ENCODE measurements at regions of chr20 and their contacts with region 1.

Region 1: GRCh38 chr20:24781422-24781980 is 167.6 kb upstream of the CST7 start:
- DNase-seq: no peak
- ATAC-seq: no peak
- H3K4me3 Mint-ChIP-seq: no peak overlapping the region
- H3K27ac Mint-ChIP-seq: no peak overlapping the region
- H3K4me1 Mint-ChIP-seq: peaks cover 9% of the 10 kb centered on the region
- H3K27me3 Mint-ChIP-seq: peaks cover 4% of the 10 kb centered on the region
- CTCF ChIP-seq: no peak

Region 2: DNA sequence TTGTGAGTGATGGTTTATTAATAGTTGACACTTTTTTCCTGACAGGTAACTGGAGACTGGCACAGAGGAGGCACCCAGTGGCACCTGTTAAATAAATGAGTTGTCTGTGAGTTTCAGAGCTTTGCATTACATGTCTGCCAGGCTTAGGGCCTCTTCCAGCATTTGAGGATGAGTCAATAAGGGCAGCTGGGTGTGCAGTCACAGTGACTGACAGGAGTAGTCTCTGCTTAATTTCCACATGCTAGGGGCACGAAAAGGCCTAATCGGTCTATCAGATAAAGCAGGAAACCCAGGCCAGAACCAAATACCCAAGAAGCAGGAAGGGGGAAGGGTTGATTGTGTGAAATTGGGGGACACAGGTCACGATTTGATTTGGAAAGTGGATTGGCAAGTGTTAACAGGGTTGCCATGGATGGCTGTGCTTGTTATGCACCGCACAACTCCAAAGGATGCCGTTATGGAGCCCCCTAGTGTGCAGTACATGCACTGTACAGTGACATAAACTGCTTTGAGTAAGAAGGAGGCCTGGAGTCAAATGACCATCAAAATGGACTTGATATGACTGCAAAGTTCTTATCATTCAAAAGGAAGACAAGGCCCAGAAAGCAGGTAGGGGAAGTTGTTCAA is 681.0 kb before region 1 on chr20:
- CTCF ChIA-PET with region 1: interaction called, 6 read pairs
- POLR2A ChIA-PET with region 1: no interaction called
- intact Hi-C with region 1: loop called (anchors 2 kb)
- DNase-seq: no peak
- ATAC-seq: no peak
- H3K4me3 Mint-ChIP-seq: no peak overlapping the region
- H3K27ac Mint-ChIP-seq: no peak overlapping the region
- H3K4me1 Mint-ChIP-seq: no peaks in the 10 kb centered on the region
- H3K27me3 Mint-ChIP-seq: peaks cover 14% of the 10 kb centered on the region
- CTCF ChIP-seq: no peak

Region 3: GRCh38 chr20:24735263-24735662 is 46.2 kb before region 1 on chr20:
- CTCF ChIA-PET with region 1: no interaction called
- POLR2A ChIA-PET with region 1: no interaction called
- intact Hi-C with region 1: no loop called
- DNase-seq: no peak
- ATAC-seq: no peak
- H3K4me3 Mint-ChIP-seq: no peak overlapping the region
- H3K27ac Mint-ChIP-seq: no peak overlapping the region
- H3K4me1 Mint-ChIP-seq: peaks cover 10% of the 10 kb centered on the region
- H3K27me3 Mint-ChIP-seq: no peaks in the 10 kb centered on the region
- CTCF ChIP-seq: no peak

Region 4: DNA sequence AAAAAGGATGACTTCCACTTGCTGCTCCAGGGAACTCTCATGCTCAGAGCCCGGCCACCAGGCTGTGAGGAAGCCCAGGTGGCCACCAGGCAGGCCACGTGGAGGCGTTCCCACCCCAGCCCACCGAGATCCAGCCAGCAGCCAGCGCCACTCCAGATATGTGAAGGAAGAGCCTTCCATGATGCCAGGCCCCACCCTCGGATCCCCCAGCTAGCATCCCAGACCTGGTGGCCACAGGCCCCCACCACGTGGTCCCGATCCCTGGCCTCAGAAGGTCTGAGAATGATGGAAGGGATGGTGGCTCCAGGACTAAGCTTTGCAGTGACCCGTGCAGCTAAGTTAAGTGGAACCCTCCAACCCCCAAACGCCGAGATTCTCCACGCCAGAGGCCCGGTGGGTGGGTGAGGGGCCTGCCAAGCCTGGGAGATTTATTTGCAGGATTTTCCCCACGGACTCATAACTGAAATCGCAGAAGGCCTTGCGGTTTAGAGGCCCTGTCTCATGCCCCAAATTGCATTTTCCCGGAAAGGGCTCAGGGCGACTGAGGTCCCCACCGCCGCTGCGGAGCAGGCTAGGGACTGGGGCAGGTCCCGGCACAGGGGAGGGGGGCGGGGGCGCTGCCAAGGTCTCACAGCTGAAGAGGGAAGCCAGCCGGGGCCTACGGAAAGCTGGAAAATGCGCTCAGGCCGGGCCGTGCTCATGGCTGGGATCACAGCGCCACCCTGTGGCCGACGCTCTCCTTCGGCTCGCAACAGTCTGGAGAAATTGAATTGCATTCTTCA is 136.5 kb after region 1 on chr20:
- CTCF ChIA-PET with region 1: interaction called, 4 read pairs
- POLR2A ChIA-PET with region 1: no interaction called
- intact Hi-C with region 1: loop called (anchors 5 kb)
- DNase-seq: no peak
- ATAC-seq: no peak
- H3K4me3 Mint-ChIP-seq: no peak overlapping the region
- H3K27ac Mint-ChIP-seq: no peak overlapping the region
- H3K4me1 Mint-ChIP-seq: peaks cover 3% of the 10 kb centered on the region
- H3K27me3 Mint-ChIP-seq: peaks cover 22% of the 10 kb centered on the region
- CTCF ChIP-seq: no peak